ENCODE measurements at regions of chr5 and their contacts with region 1.

Region 1: GRCh38 chr5:116947691-116948528 is 373.3 kb upstream of the SEMA6A start:
- DNase-seq: peak; percentile 71
- ATAC-seq: peak; percentile 90

Region 2: GRCh38 chr5:116137544-116138378 is 810.1 kb before region 1 on chr5:
- intact Hi-C with region 1: loop called (anchors 10 kb)
- DNase-seq: no peak
- ATAC-seq: peak; percentile 29

Region 3: GRCh38 chr5:116583085-116583861 is 364.6 kb before region 1 on chr5:
- intact Hi-C with region 1: loop called (anchors 5 kb)
- DNase-seq: no peak
- ATAC-seq: no peak

Region 4: GRCh38 chr5:117242028-117242427 is 294.1 kb after region 1 on chr5:
- intact Hi-C with region 1: no loop called
- DNase-seq: no peak
- ATAC-seq: no peak

Region 5: GRCh38 chr5:117713585-117714198 is 765.8 kb after region 1 on chr5:
- intact Hi-C with region 1: no loop called
- DNase-seq: no peak
- ATAC-seq: no peak